HEK293 (cell line): ENCODE measurements at regions of chr17 and their contacts with region 1.

Region 1: DNA sequence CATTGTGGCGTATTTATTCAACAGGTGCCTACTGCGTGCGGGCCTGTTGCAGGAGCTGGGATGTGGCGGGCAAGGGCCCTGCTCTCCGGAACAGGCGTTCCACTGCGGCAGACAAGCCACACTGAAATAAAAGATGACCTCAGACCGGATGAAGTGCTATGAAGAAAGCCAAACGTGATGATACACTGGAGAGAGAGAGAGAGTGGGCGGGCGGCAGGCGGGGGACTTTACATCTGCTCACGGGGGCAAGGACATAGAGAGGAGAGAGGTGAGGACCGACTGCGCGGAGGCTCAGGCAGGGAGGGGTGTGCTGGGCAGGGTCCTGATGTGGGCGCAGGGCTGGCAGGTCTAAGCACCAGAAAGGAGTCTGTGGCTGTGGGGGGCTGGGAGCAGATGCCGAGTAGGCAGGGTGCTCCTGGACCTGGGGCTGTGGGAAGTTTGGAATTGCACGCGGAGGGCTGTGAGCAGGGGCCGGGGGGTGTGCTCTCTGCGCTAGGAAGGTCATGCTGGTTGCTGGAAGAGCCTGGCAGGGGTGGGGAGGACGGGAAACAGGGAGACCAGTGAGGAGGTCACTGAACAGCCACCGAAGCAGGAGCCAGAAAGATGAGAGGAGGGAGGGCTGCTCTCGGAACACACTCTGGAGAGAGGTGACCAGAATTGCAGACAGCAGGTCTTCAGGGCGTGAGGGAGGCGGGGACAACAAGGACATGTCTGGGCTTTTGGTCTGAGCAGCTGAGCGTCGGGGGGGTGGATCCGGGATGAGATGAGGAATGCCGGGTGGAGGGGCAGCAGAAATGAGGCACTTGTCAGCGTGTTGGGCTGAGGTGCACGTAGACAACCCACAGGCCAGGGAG is 9.9 kb downstream of the MXRA7 start:
- H3K4me3 ChIP-seq: peak overlapping the region; percentile 25
- H3K27ac ChIP-seq: peak overlapping the region; percentile 56
- H3K4me1 ChIP-seq: peaks cover 40% of the 10 kb centered on the region
- CTCF ChIP-seq: no peak

Region 2: DNA sequence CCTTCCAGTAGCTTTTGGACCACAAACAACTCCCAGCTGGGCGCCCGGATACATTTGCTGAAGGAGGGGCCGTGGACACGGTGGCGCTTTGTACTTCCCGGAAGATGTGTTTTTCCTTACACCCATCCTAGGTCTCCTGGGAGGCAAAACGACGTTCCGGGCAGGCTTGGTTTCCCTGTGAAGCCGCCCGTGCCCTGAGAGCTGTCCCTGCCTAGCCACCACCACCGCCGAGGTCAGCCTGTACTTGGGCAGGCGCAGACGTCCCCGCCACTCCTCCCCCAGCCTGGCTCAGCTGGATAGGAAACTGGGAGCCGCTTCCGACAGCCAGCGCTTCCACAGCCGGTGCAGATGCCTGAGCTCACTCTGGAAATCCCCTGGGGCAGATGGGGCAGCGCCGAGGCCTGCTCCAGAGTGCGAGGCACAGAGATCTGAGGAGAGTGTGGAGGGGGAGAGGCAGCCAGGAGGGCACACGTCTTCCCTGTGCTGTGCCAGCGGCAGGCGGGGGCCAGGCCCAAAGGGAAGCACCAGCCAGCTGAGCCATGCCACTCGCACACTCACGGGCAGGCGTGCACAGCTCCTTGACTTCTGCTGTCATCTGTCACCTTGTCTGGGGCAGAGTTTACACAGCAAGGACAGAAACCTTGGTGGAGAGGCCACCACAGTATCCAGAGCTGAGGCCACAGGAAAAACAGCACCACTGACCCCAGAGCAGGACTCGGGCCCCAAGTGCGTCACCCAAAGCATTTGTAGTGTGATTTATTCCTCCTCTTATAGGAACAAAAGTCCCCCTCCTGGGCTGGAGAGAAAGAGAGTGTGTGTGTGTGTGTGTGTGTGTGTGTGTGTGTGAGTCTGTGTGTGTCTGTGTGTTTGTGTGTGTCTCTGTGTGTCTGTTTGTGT is 202.6 kb before region 1 on chr17:
- CTCF ChIA-PET with region 1: no interaction called
- POLR2A ChIA-PET with region 1: no interaction called
- H3K4me3 ChIP-seq: no peak overlapping the region
- H3K27ac ChIP-seq: no peak overlapping the region
- H3K4me1 ChIP-seq: peaks cover 21% of the 10 kb centered on the region
- CTCF ChIP-seq: no peak

Region 3: GRCh38 chr17:76635659-76636360 is 65.0 kb before region 1 on chr17:
- CTCF ChIA-PET with region 1: no interaction called
- POLR2A ChIA-PET with region 1: interaction called, 14 read pairs
- H3K4me3 ChIP-seq: no peak overlapping the region
- H3K27ac ChIP-seq: no peak overlapping the region
- H3K4me1 ChIP-seq: peaks cover 8% of the 10 kb centered on the region
- CTCF ChIP-seq: no peak

Region 4: DNA sequence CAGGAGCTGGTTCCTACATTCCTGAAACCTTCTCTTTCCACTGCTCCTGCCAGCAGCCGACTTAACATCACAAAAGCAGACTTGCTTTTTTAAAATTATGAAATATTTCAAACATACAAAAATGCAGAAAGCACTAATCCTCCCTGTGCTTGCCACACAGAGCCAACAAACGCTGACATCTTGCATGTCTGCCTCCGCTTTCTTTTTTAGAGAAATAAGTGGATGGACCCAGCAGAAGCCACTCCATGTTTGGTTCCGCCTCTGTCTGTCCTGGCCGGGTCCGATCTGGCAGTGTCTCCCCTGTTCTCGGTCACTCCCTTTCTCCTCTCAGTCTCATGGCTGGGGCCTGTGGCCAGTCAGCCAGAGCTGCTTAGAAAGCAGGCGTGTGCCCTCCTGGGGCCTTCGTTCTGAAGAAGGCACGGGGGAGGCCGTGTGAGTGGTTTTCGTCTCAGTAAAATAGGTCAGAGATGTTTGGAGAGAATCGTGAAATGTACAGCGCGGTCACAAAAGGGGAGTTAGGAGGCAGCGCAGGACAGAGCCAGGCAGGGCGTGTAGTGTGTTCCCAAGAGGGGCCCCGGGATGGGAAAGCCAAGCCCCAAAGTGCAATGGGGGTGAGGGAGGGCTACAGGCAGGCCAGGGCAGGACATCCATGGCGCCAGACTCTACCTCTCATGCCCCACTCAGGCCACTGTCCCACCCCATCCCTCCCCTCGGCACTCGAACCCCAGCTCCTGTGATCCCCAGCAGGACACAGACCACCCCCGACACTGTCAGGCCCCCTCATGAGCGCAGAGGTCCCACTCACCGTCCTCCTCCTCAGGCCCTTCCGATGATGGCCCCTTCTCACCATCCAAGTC is 13.3 kb before region 1 on chr17:
- CTCF ChIA-PET with region 1: interaction called, 15 read pairs
- POLR2A ChIA-PET with region 1: interaction called, 17 read pairs
- H3K4me3 ChIP-seq: no peak overlapping the region
- H3K27ac ChIP-seq: no peak overlapping the region; the same call in 1 of the 2 replicates
- H3K4me1 ChIP-seq: peaks cover 11% of the 10 kb centered on the region
- CTCF ChIP-seq: no peak

Region 5: DNA sequence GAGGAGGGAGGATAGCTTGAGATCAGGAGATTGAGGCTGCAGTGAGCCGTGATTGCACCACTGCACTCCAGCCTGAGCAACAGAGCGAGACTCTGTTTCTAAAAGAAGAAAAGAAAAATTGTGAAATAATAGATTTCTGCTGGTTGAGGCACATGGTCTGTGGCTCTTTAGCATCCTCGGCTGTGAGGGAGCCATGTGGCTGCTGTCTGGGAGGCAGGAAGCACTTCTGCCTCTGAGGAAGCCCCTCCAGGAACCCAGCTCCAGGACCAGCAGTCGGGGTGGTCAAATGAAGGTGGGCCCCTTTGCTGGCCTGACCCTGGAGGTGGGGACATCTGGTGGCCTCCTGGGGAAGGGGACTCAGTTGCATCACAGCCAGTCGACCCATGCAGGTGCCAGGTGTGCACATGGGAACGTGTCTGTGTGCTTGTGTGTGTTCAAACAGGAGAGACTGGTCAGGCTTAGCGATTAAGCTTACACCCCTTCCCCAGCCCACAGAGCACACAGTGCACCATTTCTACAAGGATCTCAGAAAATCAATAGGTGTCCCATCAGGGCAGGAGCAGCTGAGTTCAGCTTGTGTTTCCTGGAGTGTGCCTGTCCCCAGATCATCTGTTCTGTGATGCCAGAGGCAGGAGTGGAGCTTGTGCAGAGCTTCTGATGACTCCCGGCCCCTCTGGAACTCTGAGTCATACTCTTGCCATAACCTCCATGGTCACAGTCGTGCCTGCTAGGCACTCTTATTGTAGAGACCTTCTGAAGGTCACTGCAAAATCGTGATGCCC is 143.1 kb after region 1 on chr17:
- CTCF ChIA-PET with region 1: no interaction called
- POLR2A ChIA-PET with region 1: no interaction called
- H3K4me3 ChIP-seq: no peak overlapping the region
- H3K27ac ChIP-seq: no peak overlapping the region
- H3K4me1 ChIP-seq: peaks cover 3% of the 10 kb centered on the region; the same call in 1 of the 2 replicates
- CTCF ChIP-seq: no peak; the same call in 1 of the 2 replicates